Heart left ventricle (tissue), 16 donors: ENCODE measurements at regions of chr11 and their contacts with region 1.

Region 1: GRCh38 chr11:64846998-64847666 is 2.7 kb upstream of the CDC42BPG start:
- DNase-seq: peak; percentile 90 to 96 (median 91)
- ATAC-seq: peak; percentile 79 to 91 (median 84)
- H3K4me3 ChIP-seq: no peak overlapping the region
- H3K27ac ChIP-seq: peak overlapping the region in 6 of 12 donors; percentile 15 to 89 (median 56)
- H3K4me1 ChIP-seq: peaks cover 7 to 61% (median 52%) of the 10 kb centered on the region in 12 donors
- H3K27me3 ChIP-seq: peaks cover 0 to 4% (median 0%) of the 10 kb centered on the region in 9 donors
- CTCF ChIP-seq: peak; percentile 94 to 99 (median 98)
- POLR2A ChIP-seq: peak in 1 of 2 donors; percentile 18

Region 2: GRCh38 chr11:64868904-64869570 is 21.9 kb after region 1 on chr11:
- intact Hi-C with region 1: loop called in 1 of 10 experiments (anchors 2 kb)
- DNase-seq: peak in 2 of 5 donors; percentile 66 to 75
- ATAC-seq: peak in 3 of 4 donors; percentile 38 to 56 (median 38)
- H3K4me3 ChIP-seq: peak overlapping the region in 7 of 12 donors; percentile 11 to 39 (median 31)
- H3K27ac ChIP-seq: peak overlapping the region; percentile 73 to 93 (median 80)
- H3K4me1 ChIP-seq: peaks cover 49 to 97% (median 83%) of the 10 kb centered on the region in 12 donors
- H3K27me3 ChIP-seq: no peaks in the 10 kb centered on the region
- CTCF ChIP-seq: no peak
- POLR2A ChIP-seq: no peak

Region 3: GRCh38 chr11:64905516-64906313 is 58.6 kb after region 1 on chr11:
- intact Hi-C with region 1: no loop called
- DNase-seq: peak in 1 of 5 donors; percentile 55
- ATAC-seq: no peak
- H3K4me3 ChIP-seq: no peak overlapping the region
- H3K27ac ChIP-seq: no peak overlapping the region
- H3K4me1 ChIP-seq: no peaks in the 10 kb centered on the region
- H3K27me3 ChIP-seq: no peaks in the 10 kb centered on the region
- CTCF ChIP-seq: no peak
- POLR2A ChIP-seq: no peak

Region 4: DNA sequence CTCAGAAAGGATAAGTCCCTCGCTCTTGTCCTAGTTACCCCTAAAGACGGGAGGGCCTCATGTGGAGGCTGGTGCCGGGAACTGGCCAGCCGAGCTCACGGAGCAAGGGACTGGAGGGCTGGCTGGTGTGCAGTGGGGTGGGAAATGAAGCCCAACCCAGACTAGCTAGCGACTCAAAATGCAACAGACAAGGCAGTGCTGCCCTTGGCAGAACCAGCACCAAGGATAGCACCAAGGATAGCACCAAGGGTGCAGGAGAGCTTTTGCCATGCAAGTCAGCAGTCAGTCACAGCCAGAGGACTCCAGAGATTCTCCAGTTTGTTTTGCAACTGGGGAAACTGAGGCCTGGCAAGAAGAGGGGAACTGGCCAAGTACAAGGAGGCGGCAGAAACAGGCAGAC is 156.2 kb after region 1 on chr11:
- intact Hi-C with region 1: loop called in 4 of 10 experiments (anchors 5 to 10 kb)
- DNase-seq: no peak
- ATAC-seq: no peak
- H3K4me3 ChIP-seq: no peak overlapping the region
- H3K27ac ChIP-seq: no peak overlapping the region
- H3K4me1 ChIP-seq: peaks cover 0 to 11% (median 0%) of the 10 kb centered on the region in 12 donors
- H3K27me3 ChIP-seq: no peaks in the 10 kb centered on the region
- CTCF ChIP-seq: no peak
- POLR2A ChIP-seq: no peak